Heart left ventricle (tissue), 16 donors: ENCODE measurements at regions of chr18 and their contacts with region 1.

Region 1: DNA sequence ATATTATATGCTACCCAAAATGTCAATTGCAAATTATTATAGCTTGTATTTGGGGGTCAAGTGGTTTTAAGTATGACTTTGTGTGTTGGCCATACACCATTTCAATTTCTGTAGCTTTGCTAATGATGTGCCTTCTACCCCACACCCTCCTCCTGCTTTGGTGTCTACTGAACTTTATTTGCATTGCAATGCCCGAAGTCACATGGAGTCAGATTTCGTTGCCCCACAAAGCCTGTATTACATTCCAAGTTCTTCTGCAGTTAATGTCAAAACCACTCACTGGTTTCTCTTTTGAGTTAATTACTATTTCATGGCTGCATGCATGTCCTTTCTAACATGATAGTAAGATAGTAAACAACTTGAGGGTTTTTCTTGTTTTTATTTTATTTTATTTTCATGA is 528.9 kb downstream of the RIT2 start:
- DNase-seq: no peak
- ATAC-seq: no peak
- H3K4me3 ChIP-seq: no peak overlapping the region
- H3K27ac ChIP-seq: no peak overlapping the region
- H3K4me1 ChIP-seq: no peaks in the 10 kb centered on the region
- H3K27me3 ChIP-seq: no peaks in the 10 kb centered on the region
- CTCF ChIP-seq: no peak
- POLR2A ChIP-seq: no peak

Region 2: DNA sequence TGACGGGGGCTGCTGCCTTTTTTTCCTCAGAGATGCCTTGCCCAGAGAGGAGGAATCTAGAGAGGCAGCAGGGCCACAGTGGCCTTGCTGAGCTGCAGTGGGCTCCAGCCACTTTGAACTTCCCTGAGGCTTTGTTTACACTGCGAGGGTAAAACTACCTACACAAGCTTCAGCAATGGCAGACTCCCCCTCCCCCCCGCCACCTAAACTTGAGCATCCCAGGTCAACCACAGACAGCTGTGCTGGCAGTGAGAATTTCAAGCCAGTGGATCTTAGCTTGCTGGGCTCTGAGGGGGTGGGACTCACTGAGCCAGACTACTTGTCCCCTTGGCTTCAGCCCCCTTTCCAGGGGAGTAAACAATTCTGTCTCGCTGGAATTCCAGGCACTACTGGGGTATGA is 678.9 kb after region 1 on chr18:
- intact Hi-C with region 1: loop called in 3 of 10 experiments (anchors 10 kb)
- DNase-seq: no peak
- ATAC-seq: no peak
- H3K4me3 ChIP-seq: no peak overlapping the region
- H3K27ac ChIP-seq: no peak overlapping the region
- H3K4me1 ChIP-seq: no peaks in the 10 kb centered on the region
- H3K27me3 ChIP-seq: no peaks in the 10 kb centered on the region
- CTCF ChIP-seq: no peak
- POLR2A ChIP-seq: no peak